ENCODE measurements at regions of chr17 and their contacts with region 1.

Region 1: DNA sequence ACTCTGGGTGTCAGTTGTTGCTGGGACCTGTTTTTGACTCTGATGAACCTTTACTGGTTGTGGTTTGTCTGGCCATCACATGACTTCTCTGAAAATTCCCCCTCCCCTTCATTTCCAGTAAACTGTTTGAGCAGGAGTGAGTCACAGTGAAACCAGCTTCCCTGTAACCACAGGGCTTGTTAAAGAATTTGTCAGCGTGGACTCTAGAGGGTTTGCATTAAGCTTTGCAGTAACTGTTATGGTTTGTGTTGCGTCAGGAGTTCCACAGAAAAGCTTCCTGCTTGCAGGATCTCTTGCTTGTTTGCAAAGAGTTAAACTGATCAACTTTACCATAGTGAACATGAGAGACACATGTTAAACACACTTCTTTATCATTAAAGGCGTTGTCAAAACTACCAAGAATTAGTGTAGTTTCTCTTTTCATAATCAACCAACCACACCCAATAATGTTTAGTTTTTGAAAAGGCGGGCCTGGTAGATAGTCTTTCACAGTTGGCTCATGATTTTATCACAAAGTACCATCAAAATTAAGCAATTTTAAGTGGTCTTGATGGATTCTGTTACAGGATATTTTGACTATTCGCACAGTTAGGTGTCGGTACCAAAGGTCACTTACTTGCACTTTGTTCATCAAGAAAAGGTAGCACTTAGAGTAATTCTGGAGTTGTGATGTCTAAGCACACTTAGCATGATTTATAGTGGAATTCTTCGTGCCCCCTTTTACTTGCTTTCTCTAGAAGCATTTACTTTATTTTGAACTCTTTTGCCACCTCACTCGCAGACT is 79.3 kb downstream of the VMP1 start:
- DNase-seq: peak; percentile 86
- ATAC-seq: peak; percentile 84
- H3K4me3 Mint-ChIP-seq: peak overlapping the region; percentile 71
- H3K27ac Mint-ChIP-seq: peak overlapping the region; percentile 96
- H3K4me1 Mint-ChIP-seq: peaks cover 68% of the 10 kb centered on the region
- H3K27me3 Mint-ChIP-seq: no peaks in the 10 kb centered on the region

Region 2: GRCh38 chr17:58337600-58338453 is 1448.9 kb before region 1 on chr17:
- CTCF ChIA-PET with region 1: no interaction called
- POLR2A ChIA-PET with region 1: no interaction called
- intact Hi-C with region 1: loop called in 1 of 2 experiments (anchors 1 kb)
- DNase-seq: peak; percentile 97
- ATAC-seq: peak; percentile 57
- H3K4me3 Mint-ChIP-seq: peak overlapping the region; percentile 100
- H3K27ac Mint-ChIP-seq: peak overlapping the region; percentile 99
- H3K4me1 Mint-ChIP-seq: peaks cover 26% of the 10 kb centered on the region
- H3K27me3 Mint-ChIP-seq: no peaks in the 10 kb centered on the region

Region 3: DNA sequence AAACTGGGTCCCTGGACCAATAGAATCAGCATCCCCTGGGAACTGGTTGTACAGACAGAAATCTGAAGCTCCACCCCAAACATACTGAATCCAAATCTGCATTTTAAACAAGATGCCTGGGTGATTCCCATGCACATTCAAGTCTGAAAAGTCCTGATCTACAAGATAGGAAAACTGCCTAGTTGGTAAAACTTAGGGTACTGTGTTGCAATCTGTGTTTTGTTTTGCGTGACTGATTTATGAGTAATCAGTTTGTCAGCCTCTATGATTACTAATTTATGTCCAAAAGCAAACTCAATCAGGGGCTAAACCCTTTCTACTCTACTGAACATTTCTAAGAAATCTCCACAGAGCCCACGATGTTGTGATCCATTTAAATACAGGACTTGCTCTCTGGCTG is 351.5 kb before region 1 on chr17:
- CTCF ChIA-PET with region 1: no interaction called
- POLR2A ChIA-PET with region 1: no interaction called
- intact Hi-C with region 1: loop called in 1 of 2 experiments (anchors 2 kb)
- DNase-seq: no peak
- ATAC-seq: peak; percentile 89
- H3K4me3 Mint-ChIP-seq: peak overlapping the region; percentile 47
- H3K27ac Mint-ChIP-seq: peak overlapping the region; percentile 87
- H3K4me1 Mint-ChIP-seq: peaks cover 63% of the 10 kb centered on the region
- H3K27me3 Mint-ChIP-seq: peaks cover 7% of the 10 kb centered on the region

Region 4: DNA sequence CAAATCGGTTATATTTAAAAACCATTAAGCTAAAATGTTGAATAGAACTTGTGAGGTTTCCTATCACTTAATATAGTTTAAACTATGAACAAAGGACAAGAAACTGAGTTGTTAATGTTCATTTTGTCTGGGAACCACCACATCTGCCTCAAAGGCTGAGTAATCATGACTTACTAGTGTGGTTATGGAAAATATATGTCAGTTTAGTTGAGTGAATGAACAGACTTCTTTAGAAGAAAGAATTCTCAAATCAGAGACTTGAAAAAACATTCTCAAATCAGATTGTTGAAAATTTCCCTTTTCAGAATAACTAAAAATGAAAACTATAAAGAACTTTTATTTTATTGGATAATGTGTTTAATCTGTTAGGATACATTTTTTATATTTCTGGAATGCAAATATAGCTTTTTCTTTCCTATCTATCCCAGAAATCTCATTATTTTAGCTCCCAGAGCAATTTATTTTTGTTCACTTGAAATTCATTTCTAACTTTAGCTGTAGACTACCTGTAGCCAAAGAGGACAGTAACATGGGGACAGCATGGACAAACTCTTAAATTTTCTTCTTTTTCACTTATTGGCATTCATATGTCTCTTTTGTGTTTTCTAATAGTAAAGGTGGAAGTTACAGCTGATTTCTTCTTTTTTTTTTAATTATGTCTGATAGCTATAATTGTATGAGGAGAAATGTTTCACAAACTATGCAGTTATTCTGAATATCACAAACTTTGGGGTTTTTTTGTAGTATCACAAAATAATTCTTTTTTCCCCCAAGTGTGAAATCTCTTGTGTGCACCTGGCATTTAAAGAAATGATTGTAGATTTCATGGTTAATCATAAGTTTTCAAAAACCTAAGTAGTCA is 24.0 kb before region 1 on chr17:
- CTCF ChIA-PET with region 1: interaction called, 45 read pairs
- POLR2A ChIA-PET with region 1: interaction called, 25 read pairs
- intact Hi-C with region 1: loop called (anchors 1 kb)
- DNase-seq: no peak
- ATAC-seq: peak; percentile 66
- H3K4me3 Mint-ChIP-seq: peak overlapping the region; percentile 63
- H3K27ac Mint-ChIP-seq: peak overlapping the region; percentile 98
- H3K4me1 Mint-ChIP-seq: peaks cover 68% of the 10 kb centered on the region
- H3K27me3 Mint-ChIP-seq: no peaks in the 10 kb centered on the region

Region 5: DNA sequence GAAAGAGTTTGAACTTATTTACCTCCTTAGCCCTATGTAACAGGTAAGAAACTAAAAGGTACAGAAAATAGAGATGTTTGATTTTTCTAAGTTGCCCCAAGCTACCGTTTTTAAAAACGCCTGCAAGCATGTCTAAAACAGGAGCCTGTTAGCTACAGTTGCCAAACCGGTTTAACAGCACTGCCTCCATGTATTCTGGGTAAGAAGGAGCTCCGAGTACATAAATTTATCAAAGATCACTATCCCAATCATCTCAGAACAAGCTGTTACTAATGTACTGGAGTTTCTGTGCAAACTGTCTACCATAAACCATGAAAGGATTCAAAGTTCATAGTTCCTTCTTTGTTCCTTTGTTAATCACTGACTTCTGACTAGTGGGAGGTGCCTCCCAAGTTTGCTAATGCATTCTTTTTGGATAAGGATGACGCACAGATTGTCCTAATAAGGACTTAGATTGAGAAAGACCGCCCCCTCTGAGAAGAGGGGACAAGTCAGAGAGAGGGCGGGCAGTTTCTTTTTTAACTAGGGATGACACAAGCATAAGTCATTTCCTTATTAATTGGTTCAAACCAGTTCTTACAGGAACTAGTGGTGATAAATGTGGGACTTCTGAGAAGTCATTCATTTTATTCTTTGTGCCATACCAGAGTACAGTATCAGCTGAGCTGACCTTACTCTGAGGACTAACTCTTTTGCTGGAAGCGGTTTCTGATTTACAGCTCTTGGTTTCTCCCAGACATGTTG is 50.8 kb after region 1 on chr17:
- CTCF ChIA-PET with region 1: interaction called, 26 read pairs
- POLR2A ChIA-PET with region 1: interaction called, 230 read pairs
- intact Hi-C with region 1: loop called (anchors 1 kb)
- DNase-seq: peak; percentile 77
- ATAC-seq: peak; percentile 77
- H3K4me3 Mint-ChIP-seq: peak overlapping the region; percentile 100
- H3K27ac Mint-ChIP-seq: peak overlapping the region; percentile 100
- H3K4me1 Mint-ChIP-seq: peaks cover 41% of the 10 kb centered on the region
- H3K27me3 Mint-ChIP-seq: peaks cover 3% of the 10 kb centered on the region

Region 6: DNA sequence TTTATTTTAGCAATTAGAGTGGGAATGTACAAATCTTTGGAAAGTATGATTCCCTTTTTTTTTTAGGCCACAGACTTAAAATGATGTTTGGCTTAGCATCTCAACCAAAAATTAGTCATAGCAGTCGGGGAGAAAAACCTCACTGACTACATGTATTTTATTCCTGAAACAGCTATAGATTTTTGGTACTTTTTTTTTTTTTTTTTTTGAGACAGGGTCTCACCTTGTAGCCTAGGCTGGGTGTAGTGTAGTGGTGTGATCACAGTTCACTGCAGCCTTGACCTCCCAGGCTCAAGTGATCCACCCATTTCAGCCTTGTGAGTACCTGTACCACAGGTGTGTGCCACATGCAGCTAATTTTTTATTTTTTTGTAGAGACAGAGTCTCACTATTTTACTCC is 154.4 kb after region 1 on chr17:
- CTCF ChIA-PET with region 1: no interaction called
- POLR2A ChIA-PET with region 1: no interaction called
- intact Hi-C with region 1: loop called in 1 of 2 experiments (anchors 1 kb)
- DNase-seq: peak; percentile 31
- ATAC-seq: peak; percentile 51
- H3K4me3 Mint-ChIP-seq: peak overlapping the region; percentile 27
- H3K27ac Mint-ChIP-seq: peak overlapping the region; percentile 94
- H3K4me1 Mint-ChIP-seq: peaks cover 53% of the 10 kb centered on the region
- H3K27me3 Mint-ChIP-seq: no peaks in the 10 kb centered on the region